ENCODE measurements at regions of chr10 and their contacts with region 1.

Region 1: DNA sequence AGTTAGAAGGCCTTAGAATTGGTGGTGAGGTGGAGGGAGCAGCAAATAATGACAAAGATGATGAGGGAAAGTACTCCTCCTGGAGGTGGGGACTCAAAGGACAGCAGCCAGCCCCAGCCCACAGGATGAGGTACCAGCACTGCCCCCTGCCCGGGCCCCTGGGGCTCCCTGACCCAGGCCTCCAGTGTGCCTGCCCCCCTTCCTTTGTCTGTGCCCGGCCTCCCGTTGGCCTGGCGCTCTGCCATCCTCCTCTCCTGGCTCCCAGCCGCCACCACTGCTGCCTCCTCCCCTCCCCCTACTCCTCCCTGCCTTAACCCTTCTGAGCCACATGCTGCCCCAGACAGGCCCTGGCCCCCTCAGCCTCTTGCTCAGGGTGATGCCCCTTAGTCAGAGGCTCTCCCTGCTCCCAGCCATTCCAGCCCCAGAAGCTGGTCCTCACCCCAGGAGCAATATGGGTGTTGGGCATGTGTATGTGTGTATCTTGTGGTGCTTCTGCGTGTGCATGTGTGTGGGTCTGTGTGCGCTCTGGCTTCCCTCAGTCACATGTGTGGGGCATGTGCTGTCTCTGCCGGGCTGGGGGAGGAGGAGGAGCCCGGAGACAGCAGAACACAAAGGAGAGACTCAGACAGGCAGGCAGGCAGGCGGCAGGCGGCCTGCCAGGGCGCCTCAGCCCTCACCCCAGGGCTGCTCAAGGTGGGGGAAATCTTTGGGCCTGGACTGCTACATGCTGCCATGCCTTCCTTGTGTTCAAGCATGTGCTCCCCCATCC is 2.6 kb downstream of the LDB1 start:
- DNase-seq: no peak
- ATAC-seq: no peak
- H3K4me3 ChIP-seq: 0 out of 2 replicates have a peak overlapping the region, but pooled peaks have one; percentile 12
- H3K27ac ChIP-seq: no peak overlapping the region
- H3K4me1 ChIP-seq: peaks cover 43% of the 10 kb centered on the region
- H3K27me3 ChIP-seq: no peaks in the 10 kb centered on the region
- CTCF ChIP-seq: peak; percentile 34; the same call in 1 of the 2 replicates

Region 2: DNA sequence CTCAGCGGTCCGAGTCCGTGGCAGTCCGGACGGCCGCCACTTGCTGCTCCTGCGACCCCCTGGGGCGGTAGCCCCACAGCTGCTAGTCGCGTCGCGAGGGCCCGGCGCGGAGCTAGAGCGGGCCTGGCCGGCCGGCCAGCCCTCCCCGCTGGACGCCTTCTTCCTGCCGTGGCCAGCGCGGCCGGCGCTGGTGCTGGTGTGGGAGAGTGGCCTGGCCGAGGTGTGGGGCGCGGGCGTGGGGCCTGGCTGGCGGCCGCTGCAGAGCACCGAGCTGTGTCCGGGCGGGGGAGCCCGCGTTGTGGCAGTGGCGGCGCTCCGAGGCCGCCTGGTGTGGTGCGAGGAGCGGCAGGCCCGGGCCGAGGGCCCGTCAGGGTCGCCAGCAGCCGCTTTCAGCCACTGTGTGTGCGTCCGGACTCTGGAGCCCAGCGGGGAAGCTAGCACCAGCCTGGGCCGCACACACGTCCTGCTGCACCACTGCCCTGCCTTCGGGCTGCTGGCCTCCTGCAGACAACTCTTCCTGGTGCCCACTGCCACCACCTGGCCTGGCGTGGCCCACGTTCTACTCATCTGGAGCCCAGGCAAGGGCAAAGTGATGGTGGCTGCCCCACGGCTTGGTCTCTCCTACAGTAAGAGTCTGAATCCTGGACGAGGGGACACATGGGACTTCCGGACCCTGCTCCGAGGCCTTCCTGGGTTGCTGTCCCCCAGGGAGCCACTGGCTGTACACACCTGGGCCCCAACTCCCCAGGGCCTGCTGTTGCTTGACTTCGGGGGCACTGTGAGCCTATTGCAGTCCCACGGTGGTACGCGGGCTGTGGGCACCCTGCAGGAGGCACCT is 51.8 kb before region 1 on chr10:
- CTCF ChIA-PET with region 1: no interaction called
- POLR2A ChIA-PET with region 1: interaction called, 3 read pairs
- intact Hi-C with region 1: loop called (anchors 2 kb)
- DNase-seq: no peak
- ATAC-seq: peak; percentile 40
- H3K4me3 ChIP-seq: peak overlapping the region; percentile 84
- H3K27ac ChIP-seq: peak overlapping the region; percentile 32; the same call in 1 of the 2 replicates
- H3K4me1 ChIP-seq: peaks cover 10% of the 10 kb centered on the region; the same call in 1 of the 2 replicates
- H3K27me3 ChIP-seq: no peaks in the 10 kb centered on the region
- CTCF ChIP-seq: no peak

Region 3: GRCh38 chr10:102101152-102101551 is 16.4 kb before region 1 on chr10:
- CTCF ChIA-PET with region 1: no interaction called
- POLR2A ChIA-PET with region 1: interaction called, 14 read pairs
- intact Hi-C with region 1: no loop called
- DNase-seq: no peak
- ATAC-seq: peak; percentile 66
- H3K4me3 ChIP-seq: no peak overlapping the region
- H3K27ac ChIP-seq: no peak overlapping the region
- H3K4me1 ChIP-seq: no peaks in the 10 kb centered on the region
- H3K27me3 ChIP-seq: no peaks in the 10 kb centered on the region
- CTCF ChIP-seq: peak; percentile 38

Region 4: GRCh38 chr10:102132563-102133372 is 15.2 kb after region 1 on chr10 and contains the start of gene PPRC1:
- CTCF ChIA-PET with region 1: no interaction called
- POLR2A ChIA-PET with region 1: no interaction called
- intact Hi-C with region 1: loop called (anchors 2 kb)
- DNase-seq: peak; percentile 94
- ATAC-seq: peak; percentile 92
- H3K4me3 ChIP-seq: peak within 1 kb of the TSS; percentile 89
- H3K27ac ChIP-seq: peak within 1 kb of the TSS; percentile 90
- H3K4me1 ChIP-seq: peaks cover 21% of the 10 kb centered on the region
- H3K27me3 ChIP-seq: no peaks in the 10 kb centered on the region
- CTCF ChIP-seq: peak; percentile 86
- total RNA-seq, gene PPRC1: 27.6 and 31.3 TPM in 2 replicates